HEK293 (cell line): ENCODE measurements at regions of chr16 and their contacts with region 1.

Region 1: GRCh38 chr16:67521095-67521804 is 7.4 kb upstream of the RIPOR1 start:
- H3K4me3 ChIP-seq: peak overlapping the region; percentile 38
- H3K27ac ChIP-seq: peak overlapping the region; percentile 5; the same call in 1 of the 2 replicates
- H3K4me1 ChIP-seq: no peaks in the 10 kb centered on the region
- CTCF ChIP-seq: peak; percentile 91

Region 2: GRCh38 chr16:67226804-67227557 is 294.3 kb before region 1 on chr16 and contains the start of gene TMEM208:
- CTCF ChIA-PET with region 1: no interaction called
- POLR2A ChIA-PET with region 1: no interaction called
- H3K4me3 ChIP-seq: peak within 1 kb of the TSS; percentile 93
- H3K27ac ChIP-seq: no peak within 1 kb of the TSS; the same call in 1 of the 2 replicates
- H3K4me1 ChIP-seq: no peaks in the 10 kb centered on the region
- CTCF ChIP-seq: peak; percentile 83

Region 3: DNA sequence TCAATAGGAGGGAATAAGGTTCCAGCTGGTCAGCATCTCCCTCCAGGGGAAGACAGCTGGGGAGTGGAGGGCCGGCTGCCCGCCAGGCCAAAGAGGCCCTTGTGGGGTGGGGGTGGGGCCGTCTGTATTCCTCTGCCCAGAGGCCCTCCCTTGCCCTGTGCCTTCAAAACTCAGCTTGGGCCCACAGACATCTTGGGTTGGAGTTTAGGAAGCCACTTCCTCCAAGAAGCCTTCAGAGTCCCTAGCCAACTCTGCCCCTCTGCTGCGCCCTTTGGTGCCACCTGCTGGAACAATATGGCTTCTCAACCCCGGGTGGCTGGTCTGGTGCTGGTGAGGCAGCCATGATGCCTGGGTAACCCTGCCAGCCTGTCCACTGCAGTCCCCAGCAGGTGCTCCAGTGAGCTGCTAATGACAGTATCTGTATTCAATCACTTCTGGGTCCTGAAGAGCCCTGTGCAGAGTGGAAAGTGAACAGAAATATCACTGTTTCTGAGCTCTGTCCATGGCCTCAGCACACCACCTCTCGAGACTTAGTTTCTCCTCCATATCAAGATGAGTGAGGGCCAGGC is 73.7 kb before region 1 on chr16:
- CTCF ChIA-PET with region 1: no interaction called
- POLR2A ChIA-PET with region 1: no interaction called
- H3K4me3 ChIP-seq: no peak overlapping the region
- H3K27ac ChIP-seq: no peak overlapping the region
- H3K4me1 ChIP-seq: no peaks in the 10 kb centered on the region
- CTCF ChIP-seq: no peak

Region 4: DNA sequence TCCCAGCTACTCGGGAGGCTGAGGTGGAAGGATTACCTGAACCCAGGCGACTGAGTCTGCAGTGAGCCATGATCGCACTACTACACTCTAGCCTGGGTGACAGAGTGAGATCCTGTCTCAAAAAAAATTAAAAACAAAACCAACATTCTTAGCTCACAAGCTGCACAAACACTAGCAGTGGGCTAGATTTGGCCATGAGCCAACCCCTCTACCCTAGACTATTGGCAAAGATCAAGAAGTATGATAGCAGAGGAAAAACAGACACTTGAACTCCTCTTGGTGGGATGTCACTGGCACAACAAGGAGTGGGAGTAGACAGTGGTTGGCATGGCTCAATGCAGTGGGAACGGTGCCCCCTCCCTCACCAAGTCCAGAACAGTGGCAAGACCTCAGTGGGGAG is 12.2 kb before region 1 on chr16:
- CTCF ChIA-PET with region 1: interaction called, 17 read pairs
- POLR2A ChIA-PET with region 1: no interaction called
- H3K4me3 ChIP-seq: no peak overlapping the region
- H3K27ac ChIP-seq: no peak overlapping the region
- H3K4me1 ChIP-seq: no peaks in the 10 kb centered on the region
- CTCF ChIP-seq: no peak

Region 5: DNA sequence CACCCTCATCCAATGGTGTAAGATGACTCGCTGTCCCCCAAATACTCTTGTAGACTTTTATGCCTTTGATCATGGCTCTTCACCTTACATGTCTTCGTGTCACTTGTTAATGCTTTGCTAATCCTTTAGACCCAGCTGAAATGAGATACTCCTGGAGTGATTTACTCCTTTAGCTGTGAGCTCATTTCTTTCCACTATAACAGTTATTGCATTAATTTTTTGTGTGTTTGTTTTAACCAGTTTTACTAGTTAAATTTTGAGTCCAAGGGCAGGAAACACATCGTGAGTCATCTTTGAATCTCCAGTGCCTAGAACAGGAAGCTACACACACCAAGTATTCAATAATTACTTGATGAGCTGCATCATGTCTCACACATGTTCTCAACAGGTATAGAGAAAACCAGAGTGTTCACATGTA is 34.6 kb after region 1 on chr16:
- CTCF ChIA-PET with region 1: interaction called, 24 read pairs
- POLR2A ChIA-PET with region 1: interaction called, 18 read pairs
- H3K4me3 ChIP-seq: no peak overlapping the region
- H3K27ac ChIP-seq: no peak overlapping the region
- H3K4me1 ChIP-seq: 0 out of 2 replicates have a peak, but pooled peaks cover 2% of the 10 kb centered on the region
- CTCF ChIP-seq: no peak

Region 6: GRCh38 chr16:67641779-67642708 is 120.8 kb after region 1 on chr16:
- CTCF ChIA-PET with region 1: interaction called, 73 read pairs
- POLR2A ChIA-PET with region 1: interaction called, 7 read pairs
- H3K4me3 ChIP-seq: no peak overlapping the region
- H3K27ac ChIP-seq: no peak overlapping the region
- H3K4me1 ChIP-seq: no peaks in the 10 kb centered on the region
- CTCF ChIP-seq: no peak

Region 7: DNA sequence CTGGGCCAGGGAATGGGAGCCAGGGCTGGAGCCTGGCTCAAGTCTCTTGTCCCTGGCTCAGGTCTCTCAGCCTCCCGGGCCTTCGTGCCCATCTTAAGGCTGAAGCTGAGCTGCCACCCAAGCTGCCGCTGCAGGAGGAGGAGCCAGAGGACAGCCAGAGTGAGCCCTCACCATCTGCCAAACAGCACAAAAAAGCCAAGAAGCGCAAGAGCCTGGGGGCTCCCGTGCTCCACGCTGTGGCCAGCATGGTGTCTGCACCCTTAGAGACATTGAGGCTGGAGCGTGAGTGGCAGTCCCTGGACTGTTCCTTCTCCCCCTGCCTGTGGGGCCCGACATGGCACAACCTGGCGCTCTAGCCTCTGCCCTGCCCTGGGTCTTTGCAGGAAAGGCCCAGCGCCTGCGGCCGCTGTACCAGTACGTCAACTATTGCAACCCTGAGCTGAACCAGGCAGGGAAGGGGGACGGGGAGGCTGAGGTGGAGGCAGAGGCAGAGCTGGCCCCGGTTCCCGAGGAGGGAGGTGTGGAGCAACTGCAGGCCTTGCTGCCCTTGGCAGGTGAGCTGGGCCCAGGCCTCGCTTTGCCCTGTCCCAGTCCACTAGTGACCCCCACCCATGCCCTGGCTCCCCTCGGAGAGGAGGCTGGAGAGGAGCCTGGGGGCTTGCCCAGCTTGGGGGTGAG is 146.7 kb after region 1 on chr16:
- CTCF ChIA-PET with region 1: interaction called, 17 read pairs
- POLR2A ChIA-PET with region 1: interaction called, 4 read pairs
- H3K4me3 ChIP-seq: no peak overlapping the region
- H3K27ac ChIP-seq: no peak overlapping the region
- H3K4me1 ChIP-seq: no peaks in the 10 kb centered on the region
- CTCF ChIP-seq: peak; percentile 96